Uterus (tissue), 4 donors: ENCODE measurements at regions of chr5 and their contacts with region 1.

Region 1: GRCh38 chr5:134411546-134412266 is at the start of gene CDKN2AIPNL:
- DNase-seq: peak; percentile 88 to 91
- H3K4me3 ChIP-seq: peak within 1 kb of the TSS; percentile 68 to 80
- H3K27ac ChIP-seq: peak within 1 kb of the TSS; percentile 83 to 90
- H3K4me1 ChIP-seq: peaks cover 0 to 4% of the 10 kb centered on the region in 2 donors
- H3K27me3 ChIP-seq: no peaks in the 10 kb centered on the region
- CTCF ChIP-seq: peak; percentile 93 to 97 (median 94)
- POLR2A ChIP-seq: peak; percentile 2 to 66
- total RNA-seq, gene CDKN2AIPNL: 20.9 to 26.1 (median 24.5) TPM in 3 of 4 donors, not detected in the other

Region 2: GRCh38 chr5:134465816-134466240 is 54.1 kb after region 1 on chr5:
- intact Hi-C with region 1: loop called (anchors 10 kb)
- DNase-seq: peak; percentile 90 to 93
- H3K4me3 ChIP-seq: peak overlapping the region; percentile 40 to 43
- H3K27ac ChIP-seq: peak overlapping the region; percentile 92
- H3K4me1 ChIP-seq: no peaks in the 10 kb centered on the region
- H3K27me3 ChIP-seq: no peaks in the 10 kb centered on the region
- CTCF ChIP-seq: peak in 2 of 4 experiments; percentile 3 to 20
- POLR2A ChIP-seq: peak; percentile 62 to 69